ENCODE measurements at regions of chr22 and their contacts with region 1.

Region 1: GRCh38 chr22:37905534-37906363 is at the start of gene MICALL1:
- DNase-seq: peak; percentile 76
- ATAC-seq: peak; percentile 82
- H3K4me3 ChIP-seq: peak within 1 kb of the TSS; percentile 89
- H3K27ac ChIP-seq: peak within 1 kb of the TSS; percentile 98
- H3K4me1 ChIP-seq: peaks cover 25% of the 10 kb centered on the region
- H3K27me3 ChIP-seq: no peaks in the 10 kb centered on the region
- CTCF ChIP-seq: no peak
- total RNA-seq, gene MICALL1: 20.1 and 29.9 TPM in 2 replicates

Region 2: DNA sequence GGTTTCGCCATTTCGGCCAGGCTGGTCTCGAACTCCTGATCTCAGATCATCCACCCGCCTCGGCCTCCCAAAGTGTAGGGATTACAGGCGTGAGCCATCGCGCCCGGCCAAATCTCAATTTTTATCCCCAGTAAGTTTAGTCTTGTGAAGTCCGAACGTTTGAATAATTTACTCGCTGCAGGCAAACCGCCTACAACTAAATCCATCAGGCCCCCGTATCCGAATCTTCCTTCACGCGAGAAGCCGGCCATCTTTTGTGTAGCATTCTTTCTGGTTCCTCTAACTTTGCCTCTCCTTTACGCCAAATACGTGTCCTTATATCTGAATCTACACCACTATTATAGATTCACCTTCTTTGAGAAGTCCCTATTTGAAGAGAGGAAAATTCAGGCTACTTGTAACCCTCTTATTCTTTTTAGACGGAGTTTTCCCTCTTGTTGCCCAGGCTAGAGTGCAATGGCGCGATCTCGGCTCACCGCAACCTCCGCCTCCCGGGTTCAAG is 57.1 kb before region 1 on chr22:
- CTCF ChIA-PET with region 1: no interaction called
- POLR2A ChIA-PET with region 1: interaction called, 22 read pairs
- intact Hi-C with region 1: no loop called
- DNase-seq: peak; percentile 18
- ATAC-seq: no peak
- H3K4me3 ChIP-seq: peak overlapping the region; percentile 97
- H3K27ac ChIP-seq: peak overlapping the region; percentile 84
- H3K4me1 ChIP-seq: 0 out of 2 replicates have a peak, but pooled peaks cover 9% of the 10 kb centered on the region
- H3K27me3 ChIP-seq: no peaks in the 10 kb centered on the region
- CTCF ChIP-seq: no peak

Region 3: DNA sequence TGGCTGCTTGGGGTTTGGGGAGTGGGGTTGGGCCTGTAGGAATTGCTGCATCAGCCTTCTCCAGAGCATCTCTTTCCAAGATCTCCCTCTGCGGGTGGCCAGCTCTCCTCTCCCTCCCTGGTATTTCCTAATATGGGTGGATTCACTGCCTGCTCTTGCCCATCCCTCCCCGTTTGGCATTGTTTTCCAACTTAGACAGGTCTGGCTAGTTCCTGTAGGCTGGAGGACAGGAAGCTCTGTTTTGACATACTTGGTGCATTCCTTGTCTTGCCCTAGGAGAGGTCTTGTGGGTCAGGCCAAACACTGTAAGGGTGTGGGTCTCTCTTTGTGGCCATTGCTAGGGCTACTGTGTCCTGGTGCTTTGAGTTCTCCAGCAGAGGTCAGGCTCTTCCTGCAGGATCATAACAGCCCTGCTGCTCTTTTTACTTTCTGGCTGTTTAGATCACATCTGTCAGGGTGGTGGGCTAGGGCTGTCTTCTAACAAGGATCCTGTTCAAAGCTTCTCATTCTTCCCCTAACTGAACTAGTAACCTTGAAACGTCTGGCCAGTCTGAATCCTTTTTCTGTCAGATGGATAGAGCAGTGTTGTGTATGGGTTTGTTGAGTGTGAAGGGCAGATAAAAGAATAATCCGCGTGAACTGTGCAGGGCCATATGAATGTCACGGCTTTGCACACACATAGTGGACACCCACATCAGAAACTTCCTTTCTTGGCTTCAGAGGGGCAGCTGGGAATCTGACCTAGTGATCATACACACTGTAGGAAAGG is 18.0 kb before region 1 on chr22:
- CTCF ChIA-PET with region 1: interaction called, 4 read pairs
- POLR2A ChIA-PET with region 1: interaction called, 11 read pairs
- intact Hi-C with region 1: no loop called
- DNase-seq: peak; percentile 70
- ATAC-seq: peak; percentile 88
- H3K4me3 ChIP-seq: no peak overlapping the region
- H3K27ac ChIP-seq: no peak overlapping the region
- H3K4me1 ChIP-seq: peaks cover 4% of the 10 kb centered on the region; the same call in 1 of the 2 replicates
- H3K27me3 ChIP-seq: no peaks in the 10 kb centered on the region
- CTCF ChIP-seq: peak; percentile 57

Region 4: DNA sequence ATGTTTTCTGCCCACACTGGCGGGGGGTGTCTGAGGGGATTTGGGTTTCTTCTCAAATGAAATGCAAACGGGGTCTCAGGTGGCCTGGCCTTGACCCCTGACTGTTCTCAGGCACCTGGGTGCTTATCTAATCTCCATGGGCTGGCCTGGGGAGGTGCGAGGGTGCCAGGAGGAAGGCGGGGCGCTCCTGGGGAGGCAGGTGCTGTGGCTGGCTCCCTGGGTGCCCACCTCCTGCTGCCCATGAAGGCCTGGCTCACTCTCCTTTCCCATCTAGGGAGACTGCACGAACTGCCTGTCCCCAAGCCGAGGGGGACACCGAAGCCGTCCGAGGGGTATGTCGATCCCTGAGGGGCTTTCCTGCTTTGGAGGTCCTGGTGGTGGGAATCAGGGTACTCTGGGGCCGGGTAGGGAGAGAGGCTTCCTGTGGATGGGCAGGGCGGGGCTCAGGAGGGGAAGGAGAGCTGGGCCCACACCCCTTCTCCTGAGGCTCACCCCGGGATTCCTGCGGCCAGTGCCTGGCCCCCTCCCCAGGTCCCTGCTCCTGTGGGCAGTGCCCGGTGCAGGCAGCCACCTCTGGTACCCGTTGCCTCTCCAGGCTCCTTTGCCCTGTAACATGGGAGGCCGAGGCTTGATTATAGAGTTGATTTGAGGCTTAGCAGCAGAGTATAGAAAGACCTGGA is 18.8 kb after region 1 on chr22:
- CTCF ChIA-PET with region 1: no interaction called
- POLR2A ChIA-PET with region 1: no interaction called
- intact Hi-C with region 1: no loop called
- DNase-seq: no peak
- ATAC-seq: no peak
- H3K4me3 ChIP-seq: no peak overlapping the region
- H3K27ac ChIP-seq: no peak overlapping the region
- H3K4me1 ChIP-seq: no peaks in the 10 kb centered on the region
- H3K27me3 ChIP-seq: no peaks in the 10 kb centered on the region
- CTCF ChIP-seq: no peak

Region 5: GRCh38 chr22:38214256-38215056 is 308.7 kb after region 1 on chr22:
- CTCF ChIA-PET with region 1: no interaction called
- POLR2A ChIA-PET with region 1: interaction called, 10 read pairs
- intact Hi-C with region 1: no loop called
- DNase-seq: no peak
- ATAC-seq: no peak
- H3K4me3 ChIP-seq: no peak overlapping the region
- H3K27ac ChIP-seq: no peak overlapping the region
- H3K4me1 ChIP-seq: peaks cover 19% of the 10 kb centered on the region
- H3K27me3 ChIP-seq: no peaks in the 10 kb centered on the region
- CTCF ChIP-seq: no peak

Measured in PC-3 (cell line).